HEK293 (cell line): ENCODE measurements at regions of chr5 and their contacts with region 1.

Region 1: DNA sequence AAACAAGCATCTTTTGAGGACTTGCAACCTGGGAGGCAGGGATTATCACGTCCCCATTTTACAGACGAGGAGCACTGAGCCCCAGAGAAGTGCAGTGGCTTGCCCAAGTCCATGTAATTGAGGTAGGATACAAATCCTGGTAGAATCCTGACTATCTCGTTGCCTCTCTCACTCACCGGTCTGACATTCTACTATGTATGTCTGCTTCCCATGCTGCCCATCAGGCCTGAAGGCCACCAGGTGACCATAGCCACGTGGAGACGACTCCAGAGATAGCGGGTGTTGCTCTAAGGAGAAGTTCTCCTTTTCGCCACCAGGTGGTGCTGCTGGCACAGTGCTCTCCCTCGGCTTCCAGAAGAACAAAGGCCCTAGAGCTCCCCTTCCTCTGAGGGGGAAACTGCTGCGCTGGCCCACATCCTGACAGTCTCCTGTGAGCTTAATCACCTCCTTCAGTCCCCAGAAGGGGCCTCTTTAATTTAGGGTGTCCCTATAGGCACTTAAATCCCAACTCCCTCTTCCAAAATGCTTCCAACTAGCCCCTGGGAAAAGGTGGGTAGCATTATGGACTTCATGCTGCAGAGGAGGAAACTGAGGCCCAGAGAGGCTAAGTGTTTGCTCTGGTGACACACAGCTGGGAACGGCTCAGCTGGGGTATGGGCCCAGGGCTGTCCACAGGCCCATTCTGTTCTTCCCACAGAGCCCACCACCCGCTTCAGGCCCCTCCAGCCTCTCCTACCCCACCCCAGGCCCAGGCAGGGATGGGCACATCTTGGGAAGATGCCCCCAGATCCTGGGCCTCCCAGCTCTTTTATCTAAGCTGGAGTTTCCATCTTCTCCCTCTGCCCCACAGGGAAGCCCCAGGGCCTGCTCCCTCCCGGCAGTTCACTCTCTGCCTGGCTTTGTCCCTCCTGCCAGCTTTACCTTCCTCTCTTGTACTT is 6.4 kb downstream of the SLC34A1 start:
- H3K4me3 ChIP-seq: no peak overlapping the region
- H3K27ac ChIP-seq: no peak overlapping the region
- H3K4me1 ChIP-seq: no peaks in the 10 kb centered on the region
- CTCF ChIP-seq: peak; percentile 94

Region 2: DNA sequence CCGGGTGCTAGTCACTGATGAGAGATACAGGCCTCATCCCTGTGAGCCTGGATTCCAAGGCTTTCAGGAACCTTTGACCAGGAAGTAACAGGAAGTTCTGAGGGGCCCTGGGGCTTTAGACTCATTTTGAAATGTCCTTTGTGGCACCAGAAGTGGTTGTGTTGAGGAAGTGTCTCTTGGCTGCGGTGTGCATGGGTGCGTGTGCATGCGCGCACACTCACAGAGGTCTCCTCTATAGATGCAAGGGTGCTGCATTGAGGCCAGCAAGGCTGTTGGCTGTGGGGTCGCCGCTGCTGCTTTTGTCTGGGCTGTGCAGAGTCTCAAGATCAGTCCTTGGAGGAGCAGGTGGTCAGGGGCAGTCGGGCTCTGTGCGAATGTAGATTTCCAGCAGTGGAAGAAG is 94.7 kb before region 1 on chr5:
- CTCF ChIA-PET with region 1: no interaction called
- POLR2A ChIA-PET with region 1: no interaction called
- H3K4me3 ChIP-seq: no peak overlapping the region
- H3K27ac ChIP-seq: no peak overlapping the region
- H3K4me1 ChIP-seq: peaks cover 6% of the 10 kb centered on the region; the same call in 1 of the 2 replicates
- CTCF ChIP-seq: no peak

Region 3: DNA sequence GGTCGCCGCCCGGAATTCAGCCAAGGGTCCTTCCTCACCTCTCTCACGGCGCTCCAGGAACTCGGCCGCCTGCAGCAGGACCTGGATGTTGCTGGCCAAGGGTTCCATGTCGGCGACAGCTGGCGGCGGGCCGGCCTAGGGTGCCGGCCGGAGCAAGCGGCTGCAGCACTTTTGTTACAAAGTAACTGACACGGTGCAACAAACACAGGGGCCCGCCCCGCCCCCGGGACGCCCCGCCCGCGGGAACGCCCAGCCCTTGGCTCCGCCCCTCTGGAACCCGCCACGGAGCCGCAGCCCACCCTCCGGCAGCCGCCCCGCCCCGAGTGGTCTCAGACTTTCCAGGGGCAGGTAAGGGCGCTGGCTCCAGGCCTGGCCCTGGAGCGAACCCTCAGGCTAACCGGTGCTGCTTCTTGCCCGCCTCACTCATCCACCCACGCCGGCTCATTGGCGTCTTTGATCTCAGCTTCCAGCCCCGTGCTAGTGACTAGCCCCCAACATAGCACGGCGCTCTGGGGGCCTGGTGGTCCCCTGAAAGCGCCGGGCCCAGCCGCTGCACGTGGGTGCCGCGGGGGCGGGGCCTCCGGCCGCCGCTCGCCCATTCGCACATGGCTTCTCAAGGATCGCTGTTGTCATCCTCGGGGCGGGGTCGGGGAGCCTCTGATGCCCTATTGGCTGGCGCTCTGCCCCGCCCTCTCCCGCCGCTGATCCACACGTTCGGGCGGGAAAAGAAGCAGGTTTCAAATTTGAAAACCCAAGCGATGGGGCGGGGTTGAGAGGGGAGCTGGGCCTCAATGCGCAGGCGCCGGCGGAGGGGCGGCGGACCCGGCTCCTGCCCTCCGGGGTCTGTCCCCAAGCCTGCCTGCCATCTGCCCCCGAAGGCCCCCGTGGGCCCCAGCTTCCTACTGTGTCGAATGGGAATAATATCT is 78.6 kb before region 1 on chr5 and contains the start of gene MXD3:
- CTCF ChIA-PET with region 1: interaction called, 15 read pairs
- POLR2A ChIA-PET with region 1: no interaction called
- H3K4me3 ChIP-seq: peak within 1 kb of the TSS; percentile 86
- H3K27ac ChIP-seq: peak within 1 kb of the TSS; percentile 67
- H3K4me1 ChIP-seq: peaks cover 5% of the 10 kb centered on the region
- CTCF ChIP-seq: no peak

Region 4: GRCh38 chr5:177370488-177371119 is 20.0 kb before region 1 on chr5:
- CTCF ChIA-PET with region 1: interaction called, 65 read pairs
- POLR2A ChIA-PET with region 1: interaction called, 5 read pairs
- H3K4me3 ChIP-seq: peak overlapping the region; percentile 63
- H3K27ac ChIP-seq: peak overlapping the region; percentile 88; the same call in 1 of the 2 replicates
- H3K4me1 ChIP-seq: peaks cover 6% of the 10 kb centered on the region; the same call in 1 of the 2 replicates
- CTCF ChIP-seq: peak; percentile 63

Region 5: DNA sequence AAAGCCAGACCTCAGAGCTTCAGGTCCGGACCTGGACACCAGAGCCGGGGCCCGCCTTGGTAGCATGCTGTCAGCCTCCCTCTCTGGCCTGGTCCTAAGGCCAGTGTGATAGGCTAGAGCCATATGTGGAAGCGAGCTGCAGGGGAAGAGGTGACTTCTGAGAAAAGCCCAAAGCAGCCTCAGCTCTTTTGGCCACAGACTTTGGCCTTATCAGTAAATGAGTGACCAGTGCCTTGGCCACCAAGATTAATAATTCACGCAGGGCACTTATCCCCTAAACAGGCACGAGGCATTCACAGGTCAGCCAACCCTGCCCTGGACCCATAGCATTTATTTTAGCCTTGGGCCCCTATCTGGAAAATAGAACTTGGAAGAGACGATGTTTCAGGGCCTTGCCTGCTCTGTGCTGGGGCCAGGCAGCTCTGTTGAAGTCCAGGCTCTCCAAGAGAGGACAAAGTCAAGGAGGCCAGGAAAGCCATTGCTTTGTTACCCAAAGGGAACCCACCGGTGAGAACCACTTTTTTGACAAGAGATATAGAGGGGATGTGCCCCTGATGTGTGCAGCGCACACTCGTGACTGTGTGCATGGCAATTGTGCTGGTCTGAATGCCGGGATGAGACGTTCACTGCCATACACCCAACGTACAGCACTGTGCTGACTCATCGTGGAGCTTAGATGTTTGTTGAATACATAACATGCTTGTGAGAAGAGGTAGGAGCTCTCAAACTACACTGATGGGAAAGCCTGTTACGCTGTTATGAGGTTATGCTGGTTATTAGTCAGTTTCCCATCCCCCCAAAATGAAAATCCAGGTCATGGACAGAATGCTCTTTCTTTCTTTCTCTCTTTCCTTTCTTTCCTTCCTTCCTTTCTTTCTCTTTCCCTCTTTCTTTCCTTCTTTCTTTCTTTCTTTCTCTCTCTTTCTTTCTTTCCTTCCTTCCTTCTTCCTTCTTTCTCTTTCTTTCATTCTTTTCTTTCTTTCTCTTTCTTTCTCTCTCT is 11.4 kb before region 1 on chr5:
- CTCF ChIA-PET with region 1: interaction called, 65 read pairs
- POLR2A ChIA-PET with region 1: interaction called, 3 read pairs
- H3K4me3 ChIP-seq: no peak overlapping the region
- H3K27ac ChIP-seq: no peak overlapping the region
- H3K4me1 ChIP-seq: peaks cover 6% of the 10 kb centered on the region; the same call in 1 of the 2 replicates
- CTCF ChIP-seq: no peak

Region 6: GRCh38 chr5:177403792-177404640 is 13.4 kb after region 1 on chr5:
- CTCF ChIA-PET with region 1: interaction called, 97 read pairs
- POLR2A ChIA-PET with region 1: interaction called, 20 read pairs
- H3K4me3 ChIP-seq: peak overlapping the region; percentile 50
- H3K27ac ChIP-seq: peak overlapping the region; percentile 56; the same call in 1 of the 2 replicates
- H3K4me1 ChIP-seq: no peaks in the 10 kb centered on the region
- CTCF ChIP-seq: peak; percentile 97

Region 7: DNA sequence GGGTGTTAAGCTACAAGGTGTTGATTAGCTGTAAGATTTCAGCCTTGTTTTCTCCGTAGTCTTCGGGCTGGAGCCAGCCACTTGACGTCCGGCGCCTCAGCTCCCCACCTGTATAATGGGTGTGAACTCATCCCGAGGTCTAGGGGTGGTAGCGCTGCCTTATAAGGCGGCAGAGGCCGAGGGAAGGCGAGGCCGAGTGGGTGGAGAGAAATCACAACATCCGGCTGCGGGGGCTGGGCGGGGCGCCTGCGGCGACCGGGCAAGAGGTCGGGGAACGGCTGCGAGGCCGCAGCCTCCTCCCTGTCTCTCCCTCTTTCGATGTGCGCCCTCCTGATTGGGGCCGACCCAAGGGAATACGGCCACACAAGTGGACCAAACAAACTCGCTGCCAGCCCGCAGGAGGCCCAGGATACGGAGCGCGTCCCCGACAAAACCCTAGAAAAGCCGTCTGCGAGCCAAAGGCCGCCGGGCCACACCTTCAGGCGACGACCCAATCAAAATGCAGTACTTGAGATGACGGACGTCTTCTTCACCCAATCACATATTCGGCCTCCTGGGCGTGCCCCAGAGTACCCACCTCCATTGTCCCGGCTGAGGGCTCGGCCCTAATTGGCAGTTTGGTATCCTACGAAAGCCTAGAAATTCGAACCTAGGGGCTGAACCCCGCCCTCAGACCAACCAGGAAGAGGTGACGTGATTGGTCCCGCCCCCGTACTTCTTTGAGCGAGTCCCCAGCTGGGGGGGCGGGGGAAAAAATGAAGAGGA is 35.4 kb after region 1 on chr5:
- CTCF ChIA-PET with region 1: interaction called, 29 read pairs
- POLR2A ChIA-PET with region 1: interaction called, 9 read pairs
- H3K4me3 ChIP-seq: peak overlapping the region; percentile 68
- H3K27ac ChIP-seq: peak overlapping the region; percentile 62
- H3K4me1 ChIP-seq: no peaks in the 10 kb centered on the region
- CTCF ChIP-seq: no peak

Region 8: DNA sequence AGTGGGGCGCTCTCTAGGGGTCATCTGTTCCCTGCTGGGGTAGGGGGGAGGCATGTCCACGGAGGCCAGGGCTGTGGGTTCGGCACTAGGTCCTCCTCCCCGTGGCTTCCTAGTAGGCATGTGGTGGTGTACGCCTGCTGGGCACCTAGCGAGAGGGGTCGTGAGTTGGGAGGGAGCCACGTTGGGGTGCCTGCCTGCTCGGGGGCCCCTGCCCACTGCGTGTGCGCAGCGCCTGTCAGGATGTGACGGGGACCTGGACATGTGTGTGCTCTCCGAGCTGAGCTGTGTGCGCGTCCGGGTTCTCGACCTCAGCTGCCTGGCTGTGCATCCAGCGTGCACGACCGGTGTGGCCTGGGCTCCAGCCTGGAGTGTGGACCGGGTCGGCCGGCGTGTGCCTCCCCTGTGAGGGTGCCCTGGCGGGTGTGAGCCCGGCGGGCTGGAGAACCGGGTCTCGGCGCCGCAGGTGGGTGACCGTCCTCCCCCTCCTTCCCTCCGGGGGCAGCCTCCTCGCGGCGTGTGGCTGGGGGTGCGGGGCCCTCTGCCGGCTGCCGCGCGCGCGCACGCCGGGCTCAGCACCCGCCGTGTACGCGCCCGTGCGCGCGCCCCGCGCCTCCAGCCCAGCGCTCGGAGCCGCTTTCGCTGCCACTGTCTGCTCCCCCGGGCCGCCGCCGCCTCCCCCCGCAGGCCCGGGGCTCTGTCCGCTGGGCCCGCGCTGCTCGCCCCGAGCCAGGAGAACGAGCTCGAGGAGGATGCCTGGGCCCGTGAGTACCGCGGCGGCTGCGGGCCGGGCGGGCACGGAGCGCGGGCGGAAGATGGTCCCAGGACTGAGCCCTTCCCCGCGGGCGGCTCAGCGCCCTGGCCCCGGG is 55.8 kb after region 1 on chr5 and contains the start of gene PRR7:
- CTCF ChIA-PET with region 1: interaction called, 88 read pairs
- POLR2A ChIA-PET with region 1: interaction called, 4 read pairs
- H3K4me3 ChIP-seq: peak within 1 kb of the TSS; percentile 54
- H3K27ac ChIP-seq: peak within 1 kb of the TSS; percentile 60; the same call in 1 of the 2 replicates
- H3K4me1 ChIP-seq: no peaks in the 10 kb centered on the region
- CTCF ChIP-seq: peak; percentile 72

Region 9: GRCh38 chr5:177510567-177511053 is 120.0 kb after region 1 on chr5:
- CTCF ChIA-PET with region 1: no interaction called
- POLR2A ChIA-PET with region 1: no interaction called
- H3K4me3 ChIP-seq: no peak overlapping the region
- H3K27ac ChIP-seq: no peak overlapping the region
- H3K4me1 ChIP-seq: no peaks in the 10 kb centered on the region
- CTCF ChIP-seq: no peak